ENCODE measurements at regions of chrX and their contacts with region 1.

Region 1: GRCh38 chrX:6574758-6575157 is 39.8 kb upstream of the VCX3A start:
- DNase-seq: no peak
- ATAC-seq: no peak
- H3K4me3 ChIP-seq: no peak overlapping the region
- H3K27ac ChIP-seq: no peak overlapping the region
- H3K4me1 ChIP-seq: no peaks in the 10 kb centered on the region
- H3K27me3 ChIP-seq: no peaks in the 10 kb centered on the region
- CTCF ChIP-seq: no peak
- POLR2A ChIP-seq: no peak

Region 2: DNA sequence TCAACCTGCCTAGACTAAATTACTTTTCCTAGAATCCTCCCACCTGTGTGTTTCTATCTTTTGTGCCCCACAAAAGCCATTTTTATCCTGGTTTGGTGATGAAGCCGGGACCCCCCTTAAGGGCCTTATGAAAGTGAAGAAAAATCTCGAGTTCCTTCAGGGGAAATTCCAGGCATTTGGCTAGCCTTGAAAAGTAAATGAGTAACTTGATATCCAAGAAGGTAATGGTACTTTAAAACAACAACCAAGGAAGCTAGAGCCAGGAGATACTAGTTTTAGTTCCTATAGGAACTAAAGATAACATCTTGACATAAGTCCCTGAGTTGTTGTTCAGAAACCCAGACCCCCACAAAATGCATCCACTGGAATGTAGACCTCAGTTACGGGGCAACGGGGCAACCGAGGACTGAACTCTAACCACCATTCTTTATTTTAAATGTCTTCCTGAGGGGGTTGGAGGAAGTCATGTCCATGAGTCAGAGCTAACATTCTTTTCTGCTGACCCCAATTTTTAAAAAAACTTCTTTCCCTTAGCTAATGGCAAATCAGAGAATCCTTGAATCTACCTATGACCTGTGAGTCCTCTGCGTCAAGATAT is 113.8 kb before region 1 on chrX:
- in situ Hi-C with region 1: loop called in 1 of 4 experiments (anchors 25 kb)
- intact Hi-C with region 1: no loop called
- DNase-seq: no peak
- ATAC-seq: no peak
- H3K4me3 ChIP-seq: no peak overlapping the region
- H3K27ac ChIP-seq: no peak overlapping the region
- H3K4me1 ChIP-seq: no peaks in the 10 kb centered on the region
- H3K27me3 ChIP-seq: no peaks in the 10 kb centered on the region
- CTCF ChIP-seq: no peak
- POLR2A ChIP-seq: no peak

Measured in gastrocnemius medialis (tissue), 4 donors.